ENCODE measurements at regions of chr17 and their contacts with region 1.

Region 1: DNA sequence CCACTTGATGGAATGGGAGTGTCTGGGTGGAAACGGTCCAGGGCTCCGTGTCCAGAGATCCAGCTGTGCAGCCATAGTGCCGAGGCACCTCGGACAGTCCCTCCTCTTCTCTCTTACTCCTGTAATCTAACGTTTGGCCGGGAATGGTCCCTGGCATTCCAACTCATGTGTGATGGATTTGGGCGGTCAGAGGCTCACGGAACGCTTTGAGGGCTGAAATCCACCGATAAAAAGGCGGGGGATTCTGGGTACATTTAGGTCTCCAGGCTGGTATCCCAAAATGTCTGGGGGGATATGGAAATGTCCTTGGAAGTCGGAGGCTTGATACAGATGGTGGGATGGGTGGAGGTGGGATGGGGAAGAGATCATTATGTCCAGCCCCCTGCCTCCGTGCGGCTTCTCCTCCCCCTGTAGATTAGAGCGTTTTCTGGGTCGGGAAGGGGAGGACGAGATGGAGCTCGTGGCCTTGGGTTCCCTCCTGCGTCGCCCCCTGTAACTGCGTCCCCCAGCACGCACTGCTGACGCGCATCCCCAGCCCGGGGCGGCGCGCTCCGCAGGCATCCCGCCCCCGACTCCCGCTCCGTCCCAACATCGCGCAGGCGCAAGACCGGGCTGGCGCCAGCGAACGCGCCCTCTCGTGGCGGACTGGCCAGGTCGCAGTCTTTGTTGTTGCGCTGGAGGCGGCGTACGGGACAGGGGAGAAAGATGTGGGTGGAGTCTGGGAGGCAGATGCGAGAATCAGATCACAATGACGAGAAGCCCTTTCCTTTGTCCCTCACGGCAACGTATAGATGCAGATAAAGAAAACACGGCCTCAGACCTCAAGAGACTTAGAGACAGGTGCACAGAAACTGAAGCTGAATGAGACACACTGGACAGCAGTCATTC is 4.5 kb upstream of the SGCA start:
- DNase-seq: peak; percentile 99
- CTCF ChIP-seq: peak; percentile 93

Region 2: DNA sequence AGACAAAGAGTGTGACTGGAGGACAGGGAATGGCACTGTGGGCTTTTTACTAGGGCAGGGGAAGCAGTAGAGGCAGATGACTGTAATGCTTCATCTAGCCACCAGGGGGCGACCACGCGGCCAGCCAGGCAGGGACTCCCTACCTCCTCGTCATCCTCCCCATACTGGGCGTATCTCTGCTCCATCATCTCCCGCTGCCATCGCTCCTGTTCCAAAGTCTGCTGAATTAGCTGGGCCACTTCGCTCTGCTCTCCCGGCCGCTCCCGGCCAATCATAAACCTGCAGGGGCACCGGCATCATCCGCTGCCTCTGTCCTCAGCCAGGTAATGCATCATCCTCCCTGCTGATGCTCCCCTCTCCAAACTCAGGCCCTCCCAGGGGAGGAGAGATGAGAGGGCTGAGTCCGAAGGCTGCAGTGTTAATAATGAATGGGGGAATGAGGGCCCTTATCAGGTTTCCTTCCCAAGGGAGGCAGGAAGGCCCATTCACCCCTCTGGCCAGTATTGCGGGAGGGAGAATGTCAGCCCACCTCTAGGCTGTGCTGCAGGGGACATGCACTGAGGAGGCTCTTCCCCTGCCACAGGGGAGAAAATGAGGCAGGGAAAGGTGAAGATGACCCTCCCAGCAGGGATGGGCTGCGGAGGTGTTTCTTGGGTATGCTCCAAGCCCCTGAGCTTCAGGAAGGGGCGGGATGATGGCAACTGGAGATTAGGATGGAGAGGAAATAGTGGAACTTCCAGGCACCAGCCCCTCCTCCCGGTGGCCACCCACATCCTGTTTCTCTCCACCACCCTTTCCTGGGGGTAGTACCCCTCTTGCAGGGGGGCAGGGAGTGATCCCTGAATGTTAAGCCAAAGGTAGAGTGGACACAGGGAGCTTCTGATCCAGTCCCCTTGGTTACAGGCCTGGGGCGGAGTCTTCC is 21.1 kb before region 1 on chr17:
- CTCF ChIA-PET with region 1: interaction called, 96 read pairs
- POLR2A ChIA-PET with region 1: no interaction called
- DNase-seq: peak; percentile 87
- CTCF ChIP-seq: peak; percentile 87

Region 3: GRCh38 chr17:50177983-50178834 is 16.9 kb after region 1 on chr17:
- CTCF ChIA-PET with region 1: interaction called, 90 read pairs
- POLR2A ChIA-PET with region 1: no interaction called
- DNase-seq: peak; percentile 77
- CTCF ChIP-seq: peak; percentile 78

Region 4: DNA sequence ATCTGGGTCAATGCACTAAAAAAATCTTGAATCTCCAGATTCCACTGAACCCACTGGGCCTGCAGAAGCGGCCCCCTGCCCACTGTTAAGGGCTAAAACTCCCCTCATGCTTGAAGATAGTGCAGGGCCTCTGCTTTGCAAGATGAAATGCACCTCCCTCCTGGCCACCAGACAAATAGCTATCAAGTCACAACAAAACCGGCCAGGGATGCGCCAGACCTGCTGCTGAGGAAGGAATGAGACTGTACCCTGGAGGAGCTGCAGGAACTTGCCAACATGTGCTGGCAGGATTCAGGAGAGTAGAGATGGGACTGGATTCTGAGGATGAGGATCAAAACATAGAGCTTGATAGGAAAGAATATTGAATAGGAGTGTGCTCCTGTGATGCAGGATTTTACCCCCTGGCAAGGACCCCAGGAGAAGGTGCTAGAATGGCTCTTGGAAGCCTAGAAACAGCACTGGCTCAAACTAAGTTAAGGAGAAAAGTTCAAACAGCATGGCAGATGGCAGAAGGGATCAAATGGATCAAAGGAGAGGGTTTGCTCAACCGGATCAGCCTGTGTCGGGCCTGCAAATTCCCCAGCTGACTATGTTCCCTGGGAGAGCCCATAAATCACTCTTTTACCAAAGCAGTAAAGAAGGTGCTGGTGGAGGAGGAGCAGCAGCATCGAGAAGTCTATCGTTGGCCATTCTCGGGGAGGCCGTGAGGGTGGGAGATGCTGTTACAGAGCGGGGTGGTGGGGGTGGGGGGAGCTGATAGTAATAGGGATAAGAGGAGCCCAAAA is 157.4 kb after region 1 on chr17:
- CTCF ChIA-PET with region 1: no interaction called
- POLR2A ChIA-PET with region 1: no interaction called
- DNase-seq: no peak
- CTCF ChIP-seq: no peak

Measured in GM10248 (cell line).